ENCODE measurements at regions of chr10 and their contacts with region 1.

Region 1: GRCh38 chr10:16853201-16853600 is 36.0 kb upstream of the RSU1 start:
- DNase-seq: peak; percentile 67

Region 2: GRCh38 chr10:16570731-16571130 is 282.5 kb before region 1 on chr10:
- in situ Hi-C with region 1: no loop called
- DNase-seq: no peak

Region 3: GRCh38 chr10:16965740-16966447 is 112.7 kb after region 1 on chr10:
- in situ Hi-C with region 1: no loop called
- DNase-seq: peak; percentile 96

Region 4: GRCh38 chr10:17228091-17228940 is 375.1 kb after region 1 on chr10 and contains the start of gene VIM:
- in situ Hi-C with region 1: loop called (anchors 25 kb)
- DNase-seq: peak; percentile 86
- total RNA-seq, gene VIM: 2,222 and 2,306 TPM in 2 replicates